Head of caudate nucleus (tissue), 42 donors: ENCODE measurements at regions of chrX and their contacts with region 1.

Region 1: GRCh38 chrX:41084044-41084892 is 977 bp upstream of the USP9X start:
- DNase-seq: peak; percentile 81 to 98 (median 94)

Region 2: GRCh38 chrX:40735325-40736169 is 348.7 kb before region 1 on chrX and contains the start of gene MED14:
- intact Hi-C with region 1: loop called (anchors 10 kb)
- DNase-seq: peak; percentile 71 to 95 (median 90)

Region 3: DNA sequence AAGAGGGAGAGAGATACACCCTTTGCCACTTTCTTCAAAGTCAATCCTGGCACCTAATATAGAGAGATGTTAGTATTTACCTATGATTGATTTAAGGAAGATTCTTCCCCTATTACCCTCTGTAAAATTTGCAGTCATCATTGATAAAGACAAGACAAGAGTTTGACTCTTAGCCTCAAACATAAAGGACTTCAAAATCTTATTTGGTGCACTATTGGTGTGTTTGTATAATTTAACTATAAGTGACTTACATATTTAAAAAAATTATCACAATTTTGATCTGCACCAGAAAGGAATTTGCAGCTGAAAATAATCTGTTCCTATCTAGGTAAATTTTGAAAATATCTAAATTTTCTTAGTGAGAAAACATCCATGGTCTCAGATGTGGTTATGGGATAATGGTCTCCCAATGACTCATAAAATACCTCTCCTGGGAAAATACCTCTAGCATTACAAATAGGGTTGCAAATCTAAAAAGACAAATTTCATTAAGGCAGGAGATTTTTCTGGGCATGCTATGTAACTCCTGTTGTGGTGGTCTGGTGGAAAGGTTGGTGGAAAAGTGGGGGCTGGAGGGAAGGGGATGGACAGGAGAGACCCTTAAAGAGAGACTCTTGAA is 175.3 kb before region 1 on chrX:
- intact Hi-C with region 1: no loop called
- DNase-seq: no peak

Region 4: DNA sequence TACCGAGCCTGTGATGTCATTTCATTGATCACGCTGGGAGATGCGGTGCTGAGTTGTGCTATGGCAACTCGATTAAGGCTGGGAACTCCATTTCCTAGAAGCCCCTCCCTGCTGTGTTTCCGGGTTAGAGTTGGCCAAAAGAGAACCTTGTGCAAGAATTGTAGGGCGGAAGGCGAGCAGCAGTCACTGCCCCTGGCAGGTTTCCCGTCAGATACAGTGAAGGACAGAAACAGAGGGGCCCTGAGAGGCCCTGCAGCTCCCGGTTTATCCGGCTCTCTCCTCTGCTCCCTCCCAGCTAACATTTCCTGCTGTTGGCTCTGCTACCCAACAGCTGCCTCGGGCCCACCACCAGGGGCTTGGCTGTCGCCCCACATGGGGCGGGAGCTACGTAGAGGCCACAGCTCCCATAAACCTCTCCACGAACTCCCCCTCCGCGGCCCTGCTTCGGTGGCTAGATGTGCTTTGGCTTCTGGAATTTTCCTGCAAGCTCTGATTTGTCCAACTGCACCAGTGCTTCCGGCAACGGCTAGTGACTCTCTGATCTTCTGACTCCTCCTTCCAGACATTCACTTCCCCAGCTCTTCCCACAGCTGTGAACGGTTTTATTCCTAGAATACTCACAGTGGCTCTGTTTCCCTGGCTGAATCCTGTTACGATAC is 74.0 kb before region 1 on chrX:
- intact Hi-C with region 1: loop called (anchors 2 kb)
- DNase-seq: peak; percentile 19 to 83 (median 54)

Region 5: GRCh38 chrX:41333744-41334259 is 249.5 kb after region 1 on chrX and contains the start of gene DDX3X:
- intact Hi-C with region 1: loop called (anchors 10 kb)
- DNase-seq: peak; percentile 75 to 97 (median 93)